Activated CD4-positive, alpha-beta T cell treated with anti-CD3 and anti-CD28 coated beads for 36 hours (primary cell): ENCODE measurements at regions of chr6 and their contacts with region 1.

Region 1: GRCh38 chr6:16190214-16190613 is 48.2 kb upstream of the GMPR start:
- DNase-seq: no peak
- ATAC-seq: no peak
- H3K4me3 Mint-ChIP-seq: no peak overlapping the region
- H3K27ac Mint-ChIP-seq: no peak overlapping the region
- H3K4me1 Mint-ChIP-seq: no peaks in the 10 kb centered on the region
- H3K27me3 Mint-ChIP-seq: peaks cover 10% of the 10 kb centered on the region

Region 2: DNA sequence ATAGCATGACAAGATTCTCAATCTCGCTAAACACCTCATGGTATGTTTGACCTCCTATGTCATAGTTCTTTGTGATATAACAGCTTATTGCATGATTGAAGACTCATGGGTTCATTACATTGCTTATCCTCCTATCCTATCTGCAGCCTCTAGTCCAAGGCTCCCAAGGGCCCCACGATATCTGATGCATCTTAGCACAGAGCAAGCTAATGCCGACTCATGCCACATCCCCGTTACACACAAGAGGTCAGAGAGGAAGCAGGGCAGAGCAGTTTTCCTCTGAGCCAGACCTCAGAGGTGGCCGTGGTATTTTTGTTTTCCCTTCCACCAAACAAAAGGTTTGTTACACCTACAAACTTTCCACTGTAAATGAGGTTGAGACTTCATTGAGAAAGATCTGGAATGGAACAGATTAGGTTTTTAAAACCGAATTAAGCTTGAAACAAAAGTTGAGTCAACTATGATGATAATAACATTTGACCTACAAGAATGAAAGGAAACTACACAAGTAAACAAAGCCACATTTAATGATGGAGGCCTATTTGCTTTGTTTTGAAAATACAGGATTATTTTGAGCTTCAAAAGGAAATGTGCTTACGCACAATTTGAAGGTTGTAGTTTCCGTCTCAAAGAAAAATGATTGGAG is 195.3 kb before region 1 on chr6:
- CTCF ChIA-PET with region 1: no interaction called
- POLR2A ChIA-PET with region 1: no interaction called
- intact Hi-C with region 1: loop called in 1 of 2 experiments (anchors 5 kb)
- DNase-seq: peak; percentile 6
- ATAC-seq: no peak
- H3K4me3 Mint-ChIP-seq: no peak overlapping the region
- H3K27ac Mint-ChIP-seq: no peak overlapping the region
- H3K4me1 Mint-ChIP-seq: peaks cover 8% of the 10 kb centered on the region
- H3K27me3 Mint-ChIP-seq: peaks cover 5% of the 10 kb centered on the region

Region 3: DNA sequence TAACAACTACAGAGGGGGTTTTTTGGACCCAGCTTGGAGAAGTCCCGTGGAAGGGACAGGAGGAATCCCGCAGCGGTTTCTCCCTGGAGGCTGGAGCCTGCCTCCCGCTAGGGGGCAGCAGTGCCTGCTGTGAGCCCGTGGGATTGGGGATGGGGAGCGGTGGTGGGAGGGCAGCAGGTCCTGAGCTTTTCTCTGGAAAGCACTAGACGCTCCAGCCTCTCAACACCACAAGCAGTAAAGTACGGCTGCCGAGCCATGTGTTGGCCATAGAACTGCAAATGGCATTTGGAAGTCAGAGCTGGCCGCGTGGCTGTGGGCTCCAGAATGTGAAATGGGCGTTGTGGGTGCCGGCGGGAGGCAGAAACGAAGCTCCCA is 95.9 kb after region 1 on chr6:
- CTCF ChIA-PET with region 1: no interaction called
- POLR2A ChIA-PET with region 1: no interaction called
- intact Hi-C with region 1: no loop called
- DNase-seq: peak; percentile 52
- ATAC-seq: no peak
- H3K4me3 Mint-ChIP-seq: no peak overlapping the region
- H3K27ac Mint-ChIP-seq: no peak overlapping the region
- H3K4me1 Mint-ChIP-seq: no peaks in the 10 kb centered on the region
- H3K27me3 Mint-ChIP-seq: no peaks in the 10 kb centered on the region

Region 4: GRCh38 chr6:16319813-16320532 is 129.8 kb after region 1 on chr6:
- CTCF ChIA-PET with region 1: no interaction called
- POLR2A ChIA-PET with region 1: no interaction called
- intact Hi-C with region 1: no loop called
- DNase-seq: peak; percentile 80
- ATAC-seq: peak; percentile 62
- H3K4me3 Mint-ChIP-seq: peak overlapping the region; percentile 67
- H3K27ac Mint-ChIP-seq: peak overlapping the region; percentile 93
- H3K4me1 Mint-ChIP-seq: peaks cover 76% of the 10 kb centered on the region
- H3K27me3 Mint-ChIP-seq: no peaks in the 10 kb centered on the region